ENCODE measurements at regions of chr7 and their contacts with region 1.

Region 1: GRCh38 chr7:134514663-134515062 is 12.7 kb upstream of the AKR1B10 start:
- DNase-seq: no peak
- H3K4me3 ChIP-seq: no peak overlapping the region
- H3K27me3 ChIP-seq: no peaks in the 10 kb centered on the region
- CTCF ChIP-seq: peak; percentile 80

Region 2: GRCh38 chr7:134432296-134433152 is 82.1 kb before region 1 on chr7:
- CTCF ChIA-PET with region 1: interaction called, 323 read pairs
- POLR2A ChIA-PET with region 1: no interaction called
- DNase-seq: peak; percentile 54
- H3K4me3 ChIP-seq: peak overlapping the region; percentile 28
- H3K27me3 ChIP-seq: no peaks in the 10 kb centered on the region
- CTCF ChIP-seq: peak; percentile 53

Region 3: GRCh38 chr7:134448700-134449229 is 65.9 kb before region 1 on chr7:
- CTCF ChIA-PET with region 1: interaction called, 81 read pairs
- POLR2A ChIA-PET with region 1: interaction called, 3 read pairs
- DNase-seq: peak; percentile 66
- H3K4me3 ChIP-seq: no peak overlapping the region
- H3K27me3 ChIP-seq: no peaks in the 10 kb centered on the region
- CTCF ChIP-seq: no peak

Region 4: DNA sequence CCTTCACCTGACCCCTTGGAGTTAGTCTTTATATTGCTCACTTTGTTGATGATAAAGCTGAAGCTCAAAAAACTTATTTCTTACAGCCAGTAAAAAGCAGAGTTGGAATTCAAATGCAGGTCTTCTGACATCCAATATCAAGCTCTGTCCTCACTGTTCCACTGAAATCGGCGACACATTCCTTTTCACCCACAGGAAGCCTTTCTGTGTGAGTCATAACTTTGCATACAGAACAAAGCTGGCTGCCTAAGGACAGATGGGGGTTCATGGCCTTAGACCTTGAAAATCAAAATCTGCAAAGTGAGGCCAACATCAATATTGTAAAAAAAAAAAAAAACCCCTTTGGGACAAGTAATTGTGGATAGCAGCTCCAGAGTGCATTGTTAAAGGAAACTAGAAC is 33.9 kb before region 1 on chr7:
- CTCF ChIA-PET with region 1: interaction called, 17 read pairs
- POLR2A ChIA-PET with region 1: no interaction called
- DNase-seq: no peak
- H3K4me3 ChIP-seq: no peak overlapping the region
- H3K27me3 ChIP-seq: no peaks in the 10 kb centered on the region
- CTCF ChIP-seq: no peak

Region 5: GRCh38 chr7:134547397-134548054 is 32.9 kb after region 1 on chr7:
- CTCF ChIA-PET with region 1: interaction called, 30 read pairs
- POLR2A ChIA-PET with region 1: no interaction called
- DNase-seq: no peak
- H3K4me3 ChIP-seq: peak overlapping the region; percentile 35
- H3K27me3 ChIP-seq: peaks cover 8% of the 10 kb centered on the region
- CTCF ChIP-seq: peak; percentile 89

Region 6: GRCh38 chr7:134605973-134606923 is 91.6 kb after region 1 on chr7:
- CTCF ChIA-PET with region 1: interaction called, 248 read pairs
- POLR2A ChIA-PET with region 1: no interaction called
- DNase-seq: no peak
- H3K4me3 ChIP-seq: no peak overlapping the region
- H3K27me3 ChIP-seq: no peaks in the 10 kb centered on the region
- CTCF ChIP-seq: peak; percentile 91

Measured in BJ (cell line).